ENCODE measurements at regions of chr1 and their contacts with region 1.

Region 1: DNA sequence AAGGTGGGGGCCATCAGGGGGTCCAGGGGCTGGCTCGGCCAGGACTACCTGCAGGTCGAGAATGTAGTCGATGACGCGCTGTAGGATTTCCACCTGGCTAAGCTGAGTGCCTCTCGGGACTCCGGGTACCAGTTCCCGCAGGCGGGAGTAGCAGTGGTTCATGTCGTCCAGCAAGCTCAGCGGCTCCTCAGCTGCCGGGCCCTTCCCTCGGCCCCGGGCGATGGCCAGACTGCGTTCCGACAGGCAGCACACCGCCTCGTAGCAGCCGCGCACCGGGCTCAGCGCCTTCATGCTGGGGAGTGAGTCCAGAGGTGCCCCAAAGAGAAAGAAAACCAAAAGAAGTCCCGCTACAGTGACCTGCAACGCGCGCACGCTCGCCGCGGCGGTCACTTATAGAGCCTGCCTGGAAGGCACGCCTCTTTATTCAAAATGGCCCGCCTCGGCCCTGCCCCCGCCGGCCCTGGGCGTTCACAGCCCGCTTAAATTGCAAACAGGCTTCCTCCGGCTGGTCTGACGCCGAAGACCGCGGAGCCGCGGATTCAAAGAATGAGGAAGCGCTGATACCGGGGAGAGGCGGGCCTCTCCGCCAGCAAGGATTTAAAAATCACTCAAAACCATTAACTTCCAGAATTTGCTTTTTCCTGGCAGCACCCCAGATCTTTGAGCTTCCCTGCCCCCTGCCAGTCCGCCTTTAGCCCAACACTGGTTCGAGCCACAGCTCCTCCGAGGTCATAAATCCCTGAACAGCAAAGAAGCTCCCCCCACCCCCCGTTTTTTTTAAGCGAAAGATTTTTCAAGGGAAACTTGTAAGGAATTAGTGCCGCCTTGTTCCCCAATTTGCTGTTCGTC is at the start of gene ID3:
- DNase-seq: peak; percentile 91
- ATAC-seq: peak; percentile 72
- H3K4me3 Mint-ChIP-seq: peak within 1 kb of the TSS; percentile 84
- H3K27ac Mint-ChIP-seq: peak within 1 kb of the TSS; percentile 85
- H3K4me1 Mint-ChIP-seq: peaks cover 54% of the 10 kb centered on the region
- H3K27me3 Mint-ChIP-seq: peaks cover 21% of the 10 kb centered on the region
- total RNA-seq, gene ID3: 44.0 to 51.1 TPM

Region 2: GRCh38 chr1:23517581-23517980 is 41.8 kb before region 1 on chr1:
- POLR2A ChIA-PET with region 1: no interaction called
- DNase-seq: no peak
- ATAC-seq: no peak
- H3K4me3 Mint-ChIP-seq: no peak overlapping the region
- H3K27ac Mint-ChIP-seq: no peak overlapping the region
- H3K4me1 Mint-ChIP-seq: peaks cover 4% of the 10 kb centered on the region
- H3K27me3 Mint-ChIP-seq: no peaks in the 10 kb centered on the region

Region 3: DNA sequence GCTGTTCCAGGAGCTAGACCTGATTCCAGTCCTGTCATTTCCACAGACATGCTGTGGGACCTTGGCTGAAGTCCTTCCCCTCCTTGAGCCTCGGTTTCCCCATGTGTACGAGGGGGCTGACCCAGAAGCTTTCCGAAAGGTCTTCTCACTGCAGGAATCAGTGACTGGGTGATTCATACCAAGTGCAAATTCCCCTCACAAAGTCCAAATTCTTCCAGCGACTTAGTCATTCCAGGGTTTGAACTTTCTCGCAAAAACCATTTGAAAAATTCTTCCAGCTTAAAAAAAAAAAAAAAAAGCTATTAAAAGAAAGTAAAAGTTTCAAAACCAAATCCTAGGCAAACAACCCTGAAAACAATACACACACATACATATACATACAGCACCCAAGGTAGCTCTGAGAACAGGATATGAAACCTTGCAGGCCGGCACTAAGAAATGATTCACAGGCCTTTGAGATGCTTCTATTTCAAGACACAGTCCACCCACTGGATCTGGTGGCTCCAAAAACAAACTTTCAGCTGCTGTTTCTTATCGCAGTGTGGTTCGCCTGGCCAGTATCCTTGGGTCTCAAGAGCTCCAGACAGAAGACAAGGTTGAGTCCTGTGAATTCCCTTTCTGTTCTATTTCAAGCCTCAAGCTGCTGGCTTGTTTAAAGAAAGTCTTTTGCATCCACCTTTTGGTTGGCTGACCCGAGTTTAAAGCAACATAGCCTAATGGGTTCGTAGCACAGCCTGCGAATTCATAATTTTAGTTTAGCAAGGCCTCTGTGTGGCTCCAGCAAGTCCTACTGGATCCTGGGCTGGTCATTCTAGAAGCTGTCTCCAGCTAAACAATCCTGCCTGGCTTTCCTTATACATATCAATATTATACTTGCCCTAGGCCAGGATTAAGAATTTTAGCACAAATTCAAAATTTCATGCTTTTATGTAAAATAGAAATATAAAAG is 18.0 kb after region 1 on chr1:
- POLR2A ChIA-PET with region 1: interaction called, 74 read pairs
- DNase-seq: no peak
- ATAC-seq: peak; percentile 95
- H3K4me3 Mint-ChIP-seq: peak overlapping the region; percentile 66
- H3K27ac Mint-ChIP-seq: peak overlapping the region; percentile 90
- H3K4me1 Mint-ChIP-seq: peaks cover 51% of the 10 kb centered on the region
- H3K27me3 Mint-ChIP-seq: no peaks in the 10 kb centered on the region

Region 4: DNA sequence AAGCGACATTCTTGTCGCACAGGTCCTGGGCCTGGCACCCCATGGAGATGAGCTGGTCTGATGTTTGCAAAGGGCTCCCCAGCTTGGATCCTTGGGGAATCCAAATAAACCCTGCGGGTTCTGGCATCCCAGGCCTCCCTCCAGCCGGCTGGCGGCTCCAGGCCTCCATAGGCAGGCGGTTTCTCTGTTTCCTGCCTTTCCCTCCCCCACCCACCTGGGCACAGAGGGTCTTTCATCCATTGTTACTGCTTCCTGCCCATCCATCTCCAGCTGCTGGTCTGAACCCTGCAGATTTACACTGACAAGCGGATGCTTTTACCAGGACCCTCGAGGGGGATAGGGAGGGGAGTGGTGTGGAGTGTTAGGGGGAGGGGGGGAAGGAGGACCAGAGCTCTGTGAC is 39.1 kb after region 1 on chr1:
- POLR2A ChIA-PET with region 1: interaction called, 141 read pairs
- DNase-seq: no peak
- ATAC-seq: no peak
- H3K4me3 Mint-ChIP-seq: no peak overlapping the region
- H3K27ac Mint-ChIP-seq: peak overlapping the region; percentile 73
- H3K4me1 Mint-ChIP-seq: peaks cover 87% of the 10 kb centered on the region
- H3K27me3 Mint-ChIP-seq: no peaks in the 10 kb centered on the region

Region 5: GRCh38 chr1:23619299-23620188 is 60.2 kb after region 1 on chr1:
- POLR2A ChIA-PET with region 1: interaction called, 49 read pairs
- DNase-seq: peak; percentile 70
- ATAC-seq: peak; percentile 82
- H3K4me3 Mint-ChIP-seq: peak overlapping the region; percentile 81
- H3K27ac Mint-ChIP-seq: peak overlapping the region; percentile 61
- H3K4me1 Mint-ChIP-seq: peaks cover 55% of the 10 kb centered on the region
- H3K27me3 Mint-ChIP-seq: no peaks in the 10 kb centered on the region

Region 6: DNA sequence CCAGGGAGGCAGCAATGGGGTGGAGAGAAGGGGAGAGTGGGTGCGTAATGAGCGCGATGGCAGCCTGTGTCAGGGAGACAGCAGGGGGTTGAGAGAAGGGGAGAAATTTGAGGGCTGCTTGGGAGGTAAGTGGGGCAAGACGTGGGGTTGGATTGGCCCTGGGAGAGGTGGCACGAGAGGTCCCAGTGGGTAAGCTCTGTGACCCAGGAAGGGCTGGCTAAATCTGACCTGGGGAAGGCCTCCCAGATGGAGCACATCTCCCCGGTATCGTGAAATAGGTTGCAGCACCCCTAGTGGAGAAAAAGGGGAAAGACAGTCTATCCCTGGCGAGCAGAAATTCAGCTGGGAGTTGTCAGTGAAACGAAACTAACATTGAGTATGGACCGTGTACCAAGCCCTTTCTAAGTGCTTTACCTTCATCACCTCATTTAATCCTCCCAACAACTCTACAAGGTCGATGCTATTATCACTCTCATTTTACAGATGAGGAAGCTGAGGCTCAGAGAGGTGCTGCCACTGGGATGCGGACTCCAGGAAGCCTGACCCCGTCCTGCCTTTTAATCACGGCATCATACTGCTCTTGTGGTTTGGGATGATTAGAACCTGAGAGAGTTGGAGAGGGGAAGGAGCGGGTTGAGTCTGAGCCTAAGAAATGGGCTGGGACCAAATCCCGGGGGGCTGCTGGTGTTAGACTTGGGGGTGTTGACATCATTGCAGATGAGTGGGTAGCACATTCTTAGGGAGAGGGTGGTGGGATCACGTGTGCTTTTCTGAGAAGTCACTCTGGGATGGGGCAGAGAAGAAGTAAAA is 75.7 kb after region 1 on chr1:
- POLR2A ChIA-PET with region 1: interaction called, 72 read pairs
- DNase-seq: peak; percentile 53
- ATAC-seq: peak; percentile 71
- H3K4me3 Mint-ChIP-seq: peak overlapping the region; percentile 67
- H3K27ac Mint-ChIP-seq: peak overlapping the region; percentile 84
- H3K4me1 Mint-ChIP-seq: peaks cover 20% of the 10 kb centered on the region
- H3K27me3 Mint-ChIP-seq: no peaks in the 10 kb centered on the region